Activated CD4-positive, alpha-beta T cell treated with anti-CD3 and anti-CD28 coated beads for 36 hours (primary cell): ENCODE measurements at regions of chr17 and their contacts with region 1.

Region 1: DNA sequence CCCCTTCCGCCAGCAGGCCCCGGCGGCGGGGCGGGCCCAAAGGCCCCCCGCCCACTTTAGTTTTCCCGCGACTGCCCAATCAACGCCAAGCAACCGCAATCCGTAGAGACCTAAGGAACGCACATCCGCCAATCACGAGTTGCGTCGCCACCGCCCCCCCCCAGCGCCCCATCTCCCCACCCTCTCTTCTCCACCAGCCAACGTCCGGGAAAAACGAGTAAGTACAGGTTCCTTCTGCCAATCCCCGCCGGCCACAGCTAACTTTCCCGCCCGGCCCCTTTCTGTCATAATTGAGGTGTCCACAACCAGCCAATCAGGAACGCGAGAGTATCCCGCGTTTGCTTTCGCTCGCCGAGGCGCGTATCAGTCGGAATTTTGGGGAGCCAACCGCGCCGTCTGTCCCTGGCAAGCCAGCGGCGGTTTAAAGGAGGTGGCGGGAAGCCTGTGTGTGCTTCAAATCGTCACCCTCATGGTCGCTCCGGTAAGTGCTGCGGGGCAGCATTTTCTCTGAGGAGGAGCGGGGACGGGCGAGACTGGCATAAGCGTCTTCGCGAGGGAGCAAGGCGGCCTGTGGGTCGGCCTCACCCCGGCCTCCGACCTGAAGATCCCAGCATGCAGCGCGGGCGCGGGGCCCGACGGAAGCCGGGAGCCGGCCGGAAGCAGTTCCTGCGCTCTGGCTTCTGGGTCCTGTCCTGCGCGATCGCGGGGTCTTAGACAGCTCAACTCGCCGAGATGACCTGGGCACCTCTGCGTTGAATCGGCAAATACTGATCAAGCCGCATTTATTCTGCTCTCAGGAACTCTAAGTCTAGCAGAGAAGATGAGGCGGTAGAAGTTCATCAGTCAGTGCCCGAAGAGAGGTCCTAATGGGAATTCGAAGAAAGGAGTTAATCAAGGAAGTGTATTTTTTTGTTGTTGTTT is at the start of gene MIS12:
- DNase-seq: peak; percentile 99
- ATAC-seq: peak; percentile 94
- H3K4me3 Mint-ChIP-seq: peak within 1 kb of the TSS; percentile 96
- H3K27ac Mint-ChIP-seq: peak within 1 kb of the TSS; percentile 98
- H3K4me1 Mint-ChIP-seq: peaks cover 50% of the 10 kb centered on the region
- H3K27me3 Mint-ChIP-seq: no peaks in the 10 kb centered on the region
- total RNA-seq, gene MIS12: 29.4 to 34.4 TPM

Region 2: DNA sequence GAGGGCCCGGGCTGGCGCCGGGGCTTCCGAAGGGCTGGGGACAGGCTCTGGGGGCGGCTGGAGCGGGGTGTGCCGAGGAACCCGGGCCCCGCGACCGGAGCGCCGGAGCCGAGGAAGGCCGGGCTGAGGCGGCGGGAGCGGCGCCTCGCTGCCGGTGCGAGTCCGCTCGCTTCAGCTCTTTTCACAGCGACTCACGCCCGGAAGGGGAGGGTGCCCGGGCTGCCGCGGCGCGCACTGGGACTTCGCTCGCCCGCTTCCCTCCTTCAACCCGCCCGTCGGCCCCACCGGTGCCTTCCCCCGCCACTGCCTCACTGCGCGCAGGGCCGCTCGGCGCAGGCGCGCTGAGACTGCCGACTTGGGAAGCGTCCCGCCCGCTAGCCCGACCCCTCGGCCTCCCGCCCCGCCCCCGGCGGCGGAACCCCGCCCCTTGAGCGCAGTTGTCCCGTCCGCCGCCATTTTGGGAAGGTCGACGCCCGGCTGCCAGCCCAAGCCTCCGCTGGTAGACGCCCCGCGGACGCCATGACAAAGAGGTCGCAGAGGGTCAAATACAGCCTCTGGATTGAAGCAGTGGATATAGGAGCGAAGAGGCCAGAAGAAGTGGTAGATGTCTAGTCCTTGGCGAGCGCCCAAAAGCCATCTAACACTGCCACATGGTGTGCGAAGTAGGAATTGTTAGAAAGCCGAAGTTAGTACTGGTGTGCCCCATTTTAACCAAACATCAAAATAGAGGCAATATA is 1120.0 kb before region 1 on chr17 and contains the start of gene UBE2G1:
- CTCF ChIA-PET with region 1: no interaction called
- POLR2A ChIA-PET with region 1: no interaction called
- intact Hi-C with region 1: loop called in 1 of 2 experiments (anchors 5 kb)
- DNase-seq: peak; percentile 99
- ATAC-seq: peak; percentile 86
- H3K4me3 Mint-ChIP-seq: peak within 1 kb of the TSS; percentile 65
- H3K27ac Mint-ChIP-seq: peak within 1 kb of the TSS; percentile 90
- H3K4me1 Mint-ChIP-seq: peaks cover 29% of the 10 kb centered on the region
- H3K27me3 Mint-ChIP-seq: no peaks in the 10 kb centered on the region
- total RNA-seq, gene UBE2G1: 51.0 to 52.9 TPM

Region 3: GRCh38 chr17:4967539-4968165 is 518.8 kb before region 1 on chr17 and contains the start of gene SPAG7:
- CTCF ChIA-PET with region 1: no interaction called
- POLR2A ChIA-PET with region 1: no interaction called
- intact Hi-C with region 1: loop called in 1 of 2 experiments (anchors 2 kb)
- DNase-seq: peak; percentile 96
- ATAC-seq: peak; percentile 54
- H3K4me3 Mint-ChIP-seq: no peak within 1 kb of the TSS
- H3K27ac Mint-ChIP-seq: no peak within 1 kb of the TSS
- H3K4me1 Mint-ChIP-seq: peaks cover 40% of the 10 kb centered on the region
- H3K27me3 Mint-ChIP-seq: no peaks in the 10 kb centered on the region
- total RNA-seq, gene SPAG7: 61.4 to 69.4 TPM

Region 4: GRCh38 chr17:5419356-5419958 is 67.0 kb before region 1 on chr17 and contains the start of gene NUP88:
- CTCF ChIA-PET with region 1: interaction called, 3 read pairs
- POLR2A ChIA-PET with region 1: interaction called, 5 read pairs
- intact Hi-C with region 1: loop called (anchors 1 kb)
- DNase-seq: peak; percentile 98
- ATAC-seq: peak; percentile 95
- H3K4me3 Mint-ChIP-seq: peak within 1 kb of the TSS; percentile 98
- H3K27ac Mint-ChIP-seq: peak within 1 kb of the TSS; percentile 100
- H3K4me1 Mint-ChIP-seq: peaks cover 41% of the 10 kb centered on the region
- H3K27me3 Mint-ChIP-seq: no peaks in the 10 kb centered on the region
- total RNA-seq, gene NUP88: 135 to 199 TPM

Region 5: DNA sequence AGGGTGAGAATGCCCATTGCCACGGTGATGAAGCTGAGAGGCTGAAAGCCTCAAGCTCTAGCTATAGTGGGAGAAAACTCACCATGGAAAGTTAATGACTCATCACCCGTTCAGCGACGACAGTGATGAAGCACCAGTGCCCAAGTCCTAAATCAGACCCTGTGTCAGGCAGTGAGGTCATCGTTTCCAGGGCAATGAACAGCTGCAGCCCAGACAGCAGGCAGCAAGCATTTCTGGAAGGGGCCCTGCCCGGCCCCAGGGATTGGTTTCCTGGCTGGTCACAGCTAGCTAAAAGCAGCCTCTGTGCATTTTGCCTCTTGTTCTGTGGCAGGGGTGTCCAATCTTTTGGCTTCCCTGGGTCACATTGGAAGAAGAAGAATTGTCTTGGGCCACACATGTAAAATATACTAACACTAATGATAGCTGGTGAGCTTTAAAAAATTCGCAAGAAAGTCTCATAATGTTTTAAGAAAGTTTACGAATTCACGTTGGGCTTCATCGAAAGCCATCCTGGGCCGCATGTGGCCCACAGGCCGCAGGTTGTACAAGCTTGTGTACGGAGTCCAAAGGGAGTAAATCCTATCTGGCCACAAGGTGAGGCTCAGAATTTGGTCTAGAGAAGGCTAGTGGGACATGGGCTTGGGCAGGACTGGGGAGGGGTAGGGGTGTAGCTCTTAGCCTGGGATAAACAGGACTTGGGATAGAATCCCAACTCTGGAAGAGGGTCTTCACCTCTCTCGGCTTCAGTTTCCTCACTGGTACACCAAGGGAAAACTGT is 40.5 kb after region 1 on chr17:
- CTCF ChIA-PET with region 1: interaction called, 3 read pairs
- POLR2A ChIA-PET with region 1: interaction called, 6 read pairs
- intact Hi-C with region 1: loop called (anchors 1 to 2 kb)
- DNase-seq: peak; percentile 88
- ATAC-seq: peak; percentile 98
- H3K4me3 Mint-ChIP-seq: no peak overlapping the region
- H3K27ac Mint-ChIP-seq: peak overlapping the region; percentile 88
- H3K4me1 Mint-ChIP-seq: peaks cover 15% of the 10 kb centered on the region
- H3K27me3 Mint-ChIP-seq: no peaks in the 10 kb centered on the region

Region 6: DNA sequence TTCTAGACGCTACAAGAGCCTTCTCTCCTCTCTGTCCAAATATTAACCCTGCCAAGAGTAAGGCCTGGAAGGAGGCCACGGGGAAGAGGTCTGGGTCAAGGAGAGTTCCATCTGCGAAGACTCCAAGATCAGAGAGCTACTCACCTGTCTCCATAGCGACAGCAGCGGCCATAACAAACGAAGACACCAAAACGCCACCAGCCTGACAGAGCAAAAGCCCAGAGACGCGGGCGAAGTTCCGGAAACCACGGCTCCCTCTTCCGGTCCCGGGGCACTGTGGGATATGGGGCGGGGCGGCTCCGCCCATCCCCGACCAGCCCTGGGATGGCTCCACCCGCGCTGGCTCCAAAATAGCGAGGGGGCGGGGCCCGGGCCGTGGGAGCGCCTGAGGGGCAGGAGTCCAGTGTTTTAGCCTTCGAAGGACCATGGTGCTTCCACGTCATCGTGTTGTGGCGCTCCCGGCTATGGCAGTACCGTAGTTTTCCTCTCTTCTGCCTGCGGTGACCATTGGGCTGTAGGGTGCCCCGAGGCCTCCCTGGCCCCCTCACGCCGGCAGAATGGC is 1165.0 kb after region 1 on chr17 and contains the starts of genes C17orf100 and MED31:
- CTCF ChIA-PET with region 1: no interaction called
- POLR2A ChIA-PET with region 1: no interaction called
- intact Hi-C with region 1: loop called in 1 of 2 experiments (anchors 1 kb)
- DNase-seq: peak; percentile 97
- ATAC-seq: peak; percentile 95
- H3K4me3 Mint-ChIP-seq: peak within 1 kb of the TSS; percentile 98
- H3K27ac Mint-ChIP-seq: peak within 1 kb of the TSS; percentile 99
- H3K4me1 Mint-ChIP-seq: peaks cover 55% of the 10 kb centered on the region
- H3K27me3 Mint-ChIP-seq: peaks cover 2% of the 10 kb centered on the region
- total RNA-seq, gene C17orf100: 1.6 to 2.0 TPM
- total RNA-seq, gene MED31: 17.7 to 24.5 TPM